Mammary epithelial cell (primary cell): ENCODE measurements at regions of chr6 and their contacts with region 1.

Region 1: GRCh38 chr6:127266178-127266891 is at the start of gene RNF146:
- DNase-seq: peak; percentile 84
- H3K4me3 ChIP-seq: peak within 1 kb of the TSS; percentile 39 to 83 (median 75)
- H3K27ac ChIP-seq: peak within 1 kb of the TSS; percentile 75
- H3K4me1 ChIP-seq: peaks cover 5% of the 10 kb centered on the region
- H3K27me3 ChIP-seq: peaks cover 4% of the 10 kb centered on the region
- CTCF ChIP-seq: peak; percentile 65 to 80
- total RNA-seq, gene RNF146: 28.8 to 37.5 TPM

Region 2: GRCh38 chr6:127186889-127187288 is 79.4 kb before region 1 on chr6:
- CTCF ChIA-PET with region 1: no interaction called
- dilution Hi-C with region 1: no loop called
- in situ Hi-C with region 1: no loop called
- intact Hi-C with region 1: loop called (anchors 1 kb)
- DNase-seq: peak; percentile 24
- H3K4me3 ChIP-seq: no peak overlapping the region
- H3K27ac ChIP-seq: no peak overlapping the region
- H3K4me1 ChIP-seq: no peaks in the 10 kb centered on the region
- H3K27me3 ChIP-seq: peaks cover 10% of the 10 kb centered on the region
- CTCF ChIP-seq: peak; percentile 61 to 69

Region 3: GRCh38 chr6:127192911-127193541 is 73.3 kb before region 1 on chr6:
- CTCF ChIA-PET with region 1: no interaction called
- dilution Hi-C with region 1: no loop called
- in situ Hi-C with region 1: no loop called
- intact Hi-C with region 1: loop called (anchors 2 kb)
- DNase-seq: peak; percentile 11
- H3K4me3 ChIP-seq: no peak overlapping the region
- H3K27ac ChIP-seq: no peak overlapping the region
- H3K4me1 ChIP-seq: no peaks in the 10 kb centered on the region
- H3K27me3 ChIP-seq: no peaks in the 10 kb centered on the region
- CTCF ChIP-seq: no peak

Region 4: DNA sequence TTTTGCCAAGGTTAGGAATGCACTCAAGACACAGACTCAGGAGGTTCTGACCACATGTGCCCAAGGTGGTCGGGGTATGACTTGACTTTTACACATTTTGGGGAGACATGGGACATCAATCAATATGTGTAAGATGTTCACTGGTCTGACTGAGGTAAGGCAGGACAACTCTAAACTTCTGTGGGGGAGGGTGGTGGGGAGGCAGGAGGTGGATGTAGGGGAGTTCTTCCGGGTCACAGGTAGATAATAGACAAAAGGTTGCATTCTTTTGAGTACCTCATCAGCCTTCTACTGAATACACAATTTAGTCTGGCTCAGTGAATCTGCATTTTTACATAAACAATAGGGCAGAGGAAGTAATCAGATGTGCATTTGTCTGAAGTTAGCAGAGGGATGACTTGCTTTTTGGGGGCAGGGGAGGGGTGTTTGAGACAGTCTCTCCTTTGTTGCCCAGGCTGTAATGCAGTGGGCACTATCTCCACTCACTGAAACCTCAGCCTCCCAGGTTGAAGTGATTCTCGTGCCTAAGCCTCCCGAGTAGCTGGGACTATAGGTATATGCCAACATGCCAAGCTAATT is 66.1 kb after region 1 on chr6:
- CTCF ChIA-PET with region 1: interaction called, 36 read pairs
- dilution Hi-C with region 1: no loop called
- in situ Hi-C with region 1: no loop called
- intact Hi-C with region 1: no loop called
- DNase-seq: no peak
- H3K4me3 ChIP-seq: no peak overlapping the region
- H3K27ac ChIP-seq: no peak overlapping the region
- H3K4me1 ChIP-seq: peaks cover 4% of the 10 kb centered on the region
- H3K27me3 ChIP-seq: no peaks in the 10 kb centered on the region
- CTCF ChIP-seq: no peak

Region 5: GRCh38 chr6:127516666-127517273 is 250.4 kb after region 1 on chr6:
- CTCF ChIA-PET with region 1: interaction called, 13 read pairs
- dilution Hi-C with region 1: no loop called
- in situ Hi-C with region 1: no loop called
- intact Hi-C with region 1: no loop called
- DNase-seq: peak; percentile 40
- H3K4me3 ChIP-seq: peak overlapping the region in 2 of 3 experiments; percentile 41 to 48
- H3K27ac ChIP-seq: no peak overlapping the region
- H3K4me1 ChIP-seq: peaks cover 15% of the 10 kb centered on the region
- H3K27me3 ChIP-seq: peaks cover 36% of the 10 kb centered on the region
- CTCF ChIP-seq: peak; percentile 79 to 90